Activated naive CD4-positive, alpha-beta T cell treated with anti-CD3 and anti-CD28 coated beads for 36 hours (primary cell): ENCODE measurements at regions of chr2 and their contacts with region 1.

Region 1: DNA sequence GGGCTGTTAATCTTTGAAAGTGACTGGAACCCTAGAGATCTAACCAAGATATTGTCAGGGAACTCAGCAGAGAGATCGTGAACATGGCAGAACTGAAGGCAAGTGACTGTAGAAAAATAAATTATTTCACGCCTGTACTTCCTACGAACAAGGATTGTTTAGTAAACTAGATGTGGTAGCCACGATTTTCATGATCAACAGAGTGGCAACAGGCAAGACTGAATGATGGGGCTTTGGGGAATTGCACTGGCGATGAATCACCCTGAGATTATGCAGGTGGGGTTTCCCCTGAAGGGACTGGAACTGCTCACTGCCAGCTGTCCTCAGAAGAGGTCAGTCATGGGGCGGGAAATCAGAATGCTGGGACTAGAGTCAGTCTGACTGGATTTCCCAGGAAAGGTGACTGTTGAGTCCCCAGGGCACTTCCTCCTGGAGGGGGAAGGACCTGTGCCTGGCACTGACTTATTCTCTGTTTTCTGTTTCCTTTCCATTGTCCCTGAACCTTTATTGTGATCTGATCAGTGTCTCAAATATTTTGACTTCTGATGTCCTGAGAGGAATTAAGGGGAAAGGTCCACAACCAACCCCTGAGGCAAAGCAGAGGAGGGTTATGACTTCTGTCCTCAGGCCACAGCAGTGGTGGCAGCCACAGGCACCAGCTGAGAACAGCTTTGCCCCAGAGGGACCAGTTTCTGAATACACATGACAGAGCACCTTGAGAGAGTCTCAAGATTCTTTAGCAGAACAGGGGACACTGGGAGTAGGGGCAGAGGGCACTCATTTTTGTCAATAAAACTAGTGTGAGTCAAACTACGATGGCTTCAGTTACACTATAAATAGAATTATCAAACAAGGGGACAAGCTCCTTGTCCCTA is 70.0 kb downstream of the NAB1 start:
- DNase-seq: peak; percentile 93
- H3K4me3 Mint-ChIP-seq: peak overlapping the region; percentile 0
- H3K27ac Mint-ChIP-seq: peak overlapping the region; percentile 60
- H3K4me1 Mint-ChIP-seq: peaks cover 65% of the 10 kb centered on the region
- H3K27me3 Mint-ChIP-seq: no peaks in the 10 kb centered on the region

Region 2: GRCh38 chr2:189601043-189601442 is 1117.8 kb before region 1 on chr2:
- CTCF ChIA-PET with region 1: no interaction called
- intact Hi-C with region 1: no loop called
- DNase-seq: no peak
- H3K4me3 Mint-ChIP-seq: no peak overlapping the region
- H3K27ac Mint-ChIP-seq: no peak overlapping the region
- H3K4me1 Mint-ChIP-seq: peaks cover 1% of the 10 kb centered on the region
- H3K27me3 Mint-ChIP-seq: no peaks in the 10 kb centered on the region

Region 3: GRCh38 chr2:189783927-189784867 is 934.7 kb before region 1 on chr2 and contains the starts of genes ORMDL1 and PMS1:
- CTCF ChIA-PET with region 1: no interaction called
- intact Hi-C with region 1: loop called (anchors 5 kb)
- DNase-seq: peak; percentile 93
- H3K4me3 Mint-ChIP-seq: peak within 1 kb of the TSS; percentile 93
- H3K27ac Mint-ChIP-seq: peak within 1 kb of the TSS; percentile 92
- H3K4me1 Mint-ChIP-seq: peaks cover 51% of the 10 kb centered on the region
- H3K27me3 Mint-ChIP-seq: no peaks in the 10 kb centered on the region
- total RNA-seq, gene ORMDL1: 34.6 to 37.3 TPM
- total RNA-seq, gene PMS1: 29.7 to 32.5 TPM

Region 4: DNA sequence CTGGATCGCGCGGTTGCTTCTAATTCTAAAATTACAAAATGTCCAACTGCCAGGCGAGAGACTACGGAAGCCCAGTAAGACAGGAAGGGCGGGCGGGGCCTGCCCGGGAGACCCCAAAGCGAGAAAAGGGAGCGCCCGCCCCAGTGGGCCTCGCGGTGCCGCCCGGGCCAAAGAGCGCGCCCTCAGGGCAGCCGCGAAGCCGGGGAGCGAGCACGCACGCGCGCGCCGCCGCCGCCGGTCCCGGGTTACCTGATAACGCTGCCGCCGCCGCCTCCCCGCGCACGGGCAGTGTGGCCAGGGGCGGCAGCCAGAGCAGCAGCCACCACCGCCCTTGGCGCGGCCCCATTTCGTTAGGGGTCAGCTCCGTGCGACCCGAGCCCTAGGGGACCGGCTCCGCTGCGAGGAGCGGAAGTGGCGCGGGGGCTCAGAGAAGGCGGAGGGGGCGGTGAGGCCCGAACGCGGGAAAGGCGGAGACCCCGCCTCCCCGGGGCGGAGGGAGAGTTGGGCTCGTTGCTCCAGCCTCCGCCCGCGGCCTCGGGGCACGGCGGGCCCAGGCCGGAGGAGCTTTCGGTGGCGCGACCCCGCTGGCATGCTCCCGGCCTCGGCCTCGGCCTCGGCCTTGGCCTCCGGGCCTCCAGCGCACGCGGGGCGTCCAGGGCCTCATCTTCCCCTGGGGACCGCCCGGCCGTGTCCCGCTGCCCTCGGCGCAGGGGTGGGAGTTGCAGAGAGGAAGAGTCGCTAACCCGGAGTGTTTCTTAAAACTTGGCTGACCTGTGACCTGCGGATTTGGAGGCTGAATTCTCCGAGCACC is 184.4 kb before region 1 on chr2 and contains the start of gene NEMP2:
- CTCF ChIA-PET with region 1: no interaction called
- intact Hi-C with region 1: loop called (anchors 2 kb)
- DNase-seq: peak; percentile 82
- H3K4me3 Mint-ChIP-seq: peak within 1 kb of the TSS; percentile 96
- H3K27ac Mint-ChIP-seq: peak within 1 kb of the TSS; percentile 100
- H3K4me1 Mint-ChIP-seq: peaks cover 51% of the 10 kb centered on the region
- H3K27me3 Mint-ChIP-seq: no peaks in the 10 kb centered on the region
- total RNA-seq, gene NEMP2: 32.9 to 34.2 TPM

Region 5: DNA sequence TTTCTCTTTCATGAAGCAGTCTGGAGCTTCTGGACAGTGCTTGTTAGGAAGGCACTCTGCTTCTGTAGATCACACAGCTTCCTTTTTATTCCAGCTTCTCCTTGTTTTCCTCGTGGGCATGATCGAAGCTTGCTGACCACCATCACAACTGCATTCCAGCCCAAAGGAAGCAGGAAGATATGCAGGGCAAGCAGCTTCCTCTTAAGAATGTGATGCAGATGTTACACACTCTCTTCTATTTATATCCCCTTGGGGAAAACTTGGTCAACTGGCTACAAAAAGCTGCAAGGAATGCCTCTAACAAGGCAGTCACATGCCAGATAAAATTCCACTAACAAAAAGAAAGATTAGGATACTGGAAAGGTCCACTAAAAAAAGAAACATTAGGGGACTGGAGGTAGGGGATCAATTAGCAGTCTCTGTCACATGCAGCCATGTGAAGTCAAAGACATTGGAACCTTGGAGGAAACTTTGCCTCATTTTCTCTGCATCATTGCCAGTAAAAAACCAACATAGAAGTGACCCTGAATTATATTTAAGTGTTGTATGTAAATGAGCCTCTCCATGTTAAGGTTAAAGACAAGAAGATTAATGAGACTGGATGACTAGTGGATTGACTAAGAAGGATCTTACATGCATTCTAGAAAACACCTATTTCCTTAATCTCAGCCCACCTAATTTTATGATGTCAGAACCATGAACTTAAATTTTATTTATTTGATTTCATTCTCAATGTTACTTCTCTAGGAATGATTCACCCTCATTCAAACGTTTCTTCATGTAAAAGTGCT is 28.3 kb after region 1 on chr2:
- CTCF ChIA-PET with region 1: no interaction called
- intact Hi-C with region 1: loop called (anchors 1 kb)
- DNase-seq: no peak
- H3K4me3 Mint-ChIP-seq: no peak overlapping the region
- H3K27ac Mint-ChIP-seq: no peak overlapping the region
- H3K4me1 Mint-ChIP-seq: peaks cover 36% of the 10 kb centered on the region
- H3K27me3 Mint-ChIP-seq: no peaks in the 10 kb centered on the region

Region 6: DNA sequence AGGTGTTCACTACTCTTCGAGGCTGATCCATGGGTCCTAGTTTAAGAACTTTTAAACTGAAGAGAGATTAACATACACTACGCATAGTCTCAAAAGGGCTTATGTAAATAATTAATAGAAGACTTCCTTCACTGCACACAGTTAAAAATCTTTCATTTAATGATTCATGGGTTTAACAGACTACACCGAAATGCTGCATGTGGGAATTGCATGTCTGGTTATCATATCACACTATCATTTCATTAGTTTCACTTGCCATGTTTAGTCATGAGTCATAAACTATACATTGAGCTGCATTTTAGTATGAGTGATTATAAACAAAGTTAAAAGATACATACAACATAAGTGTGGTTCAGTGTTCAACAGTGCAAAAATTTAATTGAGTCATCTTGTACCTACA is 192.9 kb after region 1 on chr2:
- CTCF ChIA-PET with region 1: no interaction called
- intact Hi-C with region 1: loop called (anchors 1 kb)
- DNase-seq: no peak
- H3K4me3 Mint-ChIP-seq: no peak overlapping the region
- H3K27ac Mint-ChIP-seq: peak overlapping the region; percentile 51
- H3K4me1 Mint-ChIP-seq: peaks cover 48% of the 10 kb centered on the region
- H3K27me3 Mint-ChIP-seq: no peaks in the 10 kb centered on the region

Region 7: DNA sequence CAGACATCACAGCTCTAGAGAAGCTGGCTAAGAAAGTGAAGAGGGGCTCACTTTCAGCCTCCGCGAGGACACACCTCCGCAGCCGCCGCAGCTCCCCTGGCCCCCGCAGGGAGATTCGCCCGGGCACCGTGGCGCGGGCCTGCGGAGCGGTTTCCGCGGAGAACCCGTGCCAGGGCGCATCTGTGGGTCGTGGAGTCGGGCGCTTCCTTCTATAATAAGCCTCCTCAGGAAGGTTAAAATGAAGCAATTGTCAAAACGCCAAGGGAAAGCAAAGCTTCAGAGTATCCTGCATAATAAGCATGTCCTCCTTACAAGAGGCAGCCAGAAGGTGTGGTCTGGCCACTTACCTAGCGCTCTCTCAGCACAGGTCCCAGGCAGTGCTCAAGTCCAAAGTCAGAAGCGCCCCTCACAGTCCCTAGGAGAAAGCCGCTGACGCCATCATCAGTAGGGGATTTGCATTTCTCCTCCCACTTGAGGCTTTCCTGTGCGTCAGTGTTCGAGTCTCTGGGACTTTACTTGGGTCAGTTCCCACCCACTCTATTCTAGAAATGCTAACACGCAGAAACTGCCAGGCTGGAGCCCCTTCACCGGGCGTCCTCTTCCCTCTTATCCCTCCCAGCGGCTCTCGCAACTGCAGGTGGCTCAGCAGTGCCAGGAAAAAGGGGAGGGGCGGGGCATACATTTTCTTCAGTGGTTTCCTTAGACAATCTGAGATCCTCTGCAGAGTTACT is 431.9 kb after region 1 on chr2 and contains the start of gene STAT4:
- CTCF ChIA-PET with region 1: no interaction called
- intact Hi-C with region 1: loop called (anchors 2 kb)
- DNase-seq: peak; percentile 94
- H3K4me3 Mint-ChIP-seq: peak within 1 kb of the TSS; percentile 91
- H3K27ac Mint-ChIP-seq: peak within 1 kb of the TSS; percentile 97
- H3K4me1 Mint-ChIP-seq: peaks cover 57% of the 10 kb centered on the region
- H3K27me3 Mint-ChIP-seq: no peaks in the 10 kb centered on the region
- total RNA-seq, gene STAT4: 53.9 to 54.6 TPM